Activated B cell treated with CpG ODN at 0.5 μM for 24 hours (primary cell): ENCODE measurements at regions of chr12 and their contacts with region 1.

Region 1: GRCh38 chr12:10364815-10365622 is 24.8 kb downstream of the KLRK1 start:
- DNase-seq: peak; percentile 35
- ATAC-seq: peak; percentile 73
- H3K4me3 Mint-ChIP-seq: no peak overlapping the region
- H3K27ac Mint-ChIP-seq: no peak overlapping the region
- H3K4me1 Mint-ChIP-seq: peaks cover 7% of the 10 kb centered on the region
- H3K27me3 Mint-ChIP-seq: no peaks in the 10 kb centered on the region
- CTCF ChIP-seq: no peak

Region 2: GRCh38 chr12:9940375-9940774 is 424.6 kb before region 1 on chr12:
- CTCF ChIA-PET with region 1: no interaction called
- POLR2A ChIA-PET with region 1: no interaction called
- intact Hi-C with region 1: loop called (anchors 10 kb)
- DNase-seq: no peak
- ATAC-seq: no peak
- H3K4me3 Mint-ChIP-seq: no peak overlapping the region
- H3K27ac Mint-ChIP-seq: no peak overlapping the region
- H3K4me1 Mint-ChIP-seq: peaks cover 18% of the 10 kb centered on the region
- H3K27me3 Mint-ChIP-seq: peaks cover 8% of the 10 kb centered on the region
- CTCF ChIP-seq: no peak

Region 3: DNA sequence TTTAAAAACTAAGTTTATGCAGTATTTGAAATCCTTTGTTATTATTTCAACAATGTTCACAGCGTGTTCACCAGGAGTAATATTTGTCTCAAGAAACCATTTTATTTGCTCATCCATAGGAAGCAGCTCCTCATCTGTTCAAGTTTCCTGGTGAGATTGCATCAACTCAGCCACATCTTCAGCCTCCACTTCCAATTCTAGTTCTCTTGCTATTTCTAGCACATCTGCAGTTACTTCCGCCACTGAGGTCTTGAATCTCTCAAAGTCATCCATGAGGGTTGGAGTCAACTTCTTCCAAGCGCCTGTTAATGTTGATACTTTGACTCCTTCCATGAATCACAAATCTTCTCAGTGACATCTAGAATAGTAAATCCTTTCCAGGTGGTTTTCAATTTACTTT is 316.5 kb before region 1 on chr12:
- CTCF ChIA-PET with region 1: no interaction called
- POLR2A ChIA-PET with region 1: no interaction called
- intact Hi-C with region 1: no loop called
- DNase-seq: no peak
- ATAC-seq: no peak
- H3K4me3 Mint-ChIP-seq: no peak overlapping the region
- H3K27ac Mint-ChIP-seq: no peak overlapping the region
- H3K4me1 Mint-ChIP-seq: peaks cover 10% of the 10 kb centered on the region
- H3K27me3 Mint-ChIP-seq: peaks cover 15% of the 10 kb centered on the region
- CTCF ChIP-seq: no peak

Region 4: DNA sequence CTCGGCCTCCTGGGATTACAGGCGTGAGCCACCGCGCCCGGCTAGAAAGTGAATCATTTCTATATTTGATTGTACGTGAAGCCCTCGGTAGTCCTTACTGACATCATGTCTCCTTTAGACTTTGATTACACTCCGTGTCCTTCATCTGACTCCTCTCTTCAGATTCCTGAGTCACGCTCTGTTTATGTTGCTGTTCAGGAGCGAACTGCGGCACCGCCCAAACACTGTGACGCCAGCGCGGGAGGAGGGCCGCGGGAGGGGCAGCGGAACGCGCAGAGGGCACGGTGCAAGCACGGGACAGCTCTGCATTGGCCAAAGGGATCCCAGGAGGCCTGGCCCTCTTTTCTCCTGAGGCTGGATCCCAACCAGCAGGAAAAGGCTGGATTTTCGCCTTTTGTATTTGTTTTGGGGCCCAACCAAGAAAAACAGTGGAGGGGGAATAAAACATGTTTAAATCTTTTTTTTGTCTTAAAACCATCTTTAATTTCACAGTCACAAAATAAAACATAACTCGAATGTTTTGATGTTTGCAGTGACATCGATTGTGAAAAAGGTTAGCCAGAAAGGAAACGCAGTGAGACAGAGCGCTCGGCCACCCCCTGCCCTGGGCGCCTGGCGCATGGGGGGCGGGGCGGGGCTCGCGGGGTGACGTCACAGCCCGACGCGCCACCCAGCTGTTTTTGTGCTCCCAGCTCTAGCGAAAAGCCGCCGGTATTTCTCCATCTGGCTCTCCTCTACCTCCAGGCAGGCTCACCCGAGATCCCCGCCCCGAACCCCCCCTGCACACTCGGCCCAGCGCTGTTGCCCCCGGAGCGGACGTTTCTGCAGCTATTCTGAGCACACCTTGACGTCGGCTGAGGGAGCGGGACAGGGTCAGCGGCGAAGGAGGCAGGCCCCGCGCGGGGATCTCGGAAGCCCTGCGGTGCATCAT is 152.6 kb before region 1 on chr12 and contains the start of gene GABARAPL1:
- CTCF ChIA-PET with region 1: no interaction called
- POLR2A ChIA-PET with region 1: no interaction called
- intact Hi-C with region 1: loop called (anchors 2 kb)
- DNase-seq: peak; percentile 59
- ATAC-seq: peak; percentile 74
- H3K4me3 Mint-ChIP-seq: peak within 1 kb of the TSS; percentile 91
- H3K27ac Mint-ChIP-seq: peak within 1 kb of the TSS; percentile 46
- H3K4me1 Mint-ChIP-seq: peaks cover 17% of the 10 kb centered on the region
- H3K27me3 Mint-ChIP-seq: peaks cover 19% of the 10 kb centered on the region
- CTCF ChIP-seq: no peak
- total RNA-seq, gene GABARAPL1: 2.1 and 2.5 TPM in 2 replicates

Region 5: DNA sequence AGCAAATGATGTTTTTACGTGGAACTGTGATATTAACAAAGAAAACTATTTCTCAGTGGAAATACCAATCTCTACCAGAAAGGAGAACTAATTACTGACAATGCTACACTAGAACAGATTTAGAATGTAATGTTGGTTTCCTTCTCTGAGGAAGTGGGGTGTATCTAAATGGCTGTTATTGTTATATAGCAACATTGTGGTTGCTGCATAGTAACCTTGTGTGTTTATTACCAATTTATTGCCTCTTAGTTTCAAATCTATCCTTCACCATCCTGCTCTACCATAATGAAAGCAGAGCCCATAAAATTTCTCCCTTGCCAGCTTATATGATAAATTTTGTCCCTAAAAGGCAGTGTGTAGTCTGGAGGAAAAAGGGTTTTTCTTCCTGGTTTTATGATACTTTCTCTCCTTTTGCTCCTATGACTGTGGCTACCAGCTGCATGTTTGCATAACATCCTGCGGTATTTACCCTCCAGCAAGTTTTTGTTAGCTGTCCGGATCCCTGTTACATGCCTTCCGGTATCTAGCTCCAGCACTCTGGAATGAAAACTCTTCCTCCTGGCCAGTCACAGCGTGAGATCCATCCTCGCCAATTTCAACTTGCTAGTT is 30.5 kb after region 1 on chr12:
- CTCF ChIA-PET with region 1: no interaction called
- POLR2A ChIA-PET with region 1: interaction called, 3 read pairs
- intact Hi-C with region 1: loop called (anchors 1 kb)
- DNase-seq: no peak
- ATAC-seq: peak; percentile 82
- H3K4me3 Mint-ChIP-seq: peak overlapping the region; percentile 0
- H3K27ac Mint-ChIP-seq: peak overlapping the region; percentile 74
- H3K4me1 Mint-ChIP-seq: peaks cover 31% of the 10 kb centered on the region
- H3K27me3 Mint-ChIP-seq: peaks cover 17% of the 10 kb centered on the region
- CTCF ChIP-seq: no peak

Region 6: GRCh38 chr12:10721651-10722501 is 356.9 kb after region 1 on chr12:
- CTCF ChIA-PET with region 1: no interaction called
- POLR2A ChIA-PET with region 1: no interaction called
- intact Hi-C with region 1: loop called (anchors 2 kb)
- DNase-seq: peak; percentile 36
- ATAC-seq: peak; percentile 49
- H3K4me3 Mint-ChIP-seq: peak overlapping the region; percentile 88
- H3K27ac Mint-ChIP-seq: peak overlapping the region; percentile 91
- H3K4me1 Mint-ChIP-seq: peaks cover 33% of the 10 kb centered on the region
- H3K27me3 Mint-ChIP-seq: peaks cover 8% of the 10 kb centered on the region
- CTCF ChIP-seq: no peak

Region 7: GRCh38 chr12:11264506-11264905 is 899.5 kb after region 1 on chr12:
- CTCF ChIA-PET with region 1: no interaction called
- POLR2A ChIA-PET with region 1: no interaction called
- intact Hi-C with region 1: no loop called
- DNase-seq: no peak
- ATAC-seq: no peak
- H3K4me3 Mint-ChIP-seq: no peak overlapping the region
- H3K27ac Mint-ChIP-seq: no peak overlapping the region
- H3K4me1 Mint-ChIP-seq: no peaks in the 10 kb centered on the region
- H3K27me3 Mint-ChIP-seq: no peaks in the 10 kb centered on the region
- CTCF ChIP-seq: no peak